CD14-positive monocyte (primary cell): ENCODE measurements at regions of chr1 and their contacts with region 1.

Region 1: GRCh38 chr1:29698033-29698432 is 461.7 kb downstream of the PTPRU start:
- DNase-seq: no peak
- H3K4me3 ChIP-seq: no peak overlapping the region
- H3K4me3 Mint-ChIP-seq: no peak overlapping the region
- H3K27ac ChIP-seq: no peak overlapping the region
- H3K27ac Mint-ChIP-seq: no peak overlapping the region
- H3K4me1 ChIP-seq: no peaks in the 10 kb centered on the region
- H3K4me1 Mint-ChIP-seq: no peaks in the 10 kb centered on the region
- H3K27me3 ChIP-seq: no peaks in the 10 kb centered on the region
- H3K27me3 Mint-ChIP-seq: peaks cover 0 to 9% (median 7%) of the 10 kb centered on the region in 3 donors
- CTCF ChIP-seq: peak; percentile 31

Region 2: DNA sequence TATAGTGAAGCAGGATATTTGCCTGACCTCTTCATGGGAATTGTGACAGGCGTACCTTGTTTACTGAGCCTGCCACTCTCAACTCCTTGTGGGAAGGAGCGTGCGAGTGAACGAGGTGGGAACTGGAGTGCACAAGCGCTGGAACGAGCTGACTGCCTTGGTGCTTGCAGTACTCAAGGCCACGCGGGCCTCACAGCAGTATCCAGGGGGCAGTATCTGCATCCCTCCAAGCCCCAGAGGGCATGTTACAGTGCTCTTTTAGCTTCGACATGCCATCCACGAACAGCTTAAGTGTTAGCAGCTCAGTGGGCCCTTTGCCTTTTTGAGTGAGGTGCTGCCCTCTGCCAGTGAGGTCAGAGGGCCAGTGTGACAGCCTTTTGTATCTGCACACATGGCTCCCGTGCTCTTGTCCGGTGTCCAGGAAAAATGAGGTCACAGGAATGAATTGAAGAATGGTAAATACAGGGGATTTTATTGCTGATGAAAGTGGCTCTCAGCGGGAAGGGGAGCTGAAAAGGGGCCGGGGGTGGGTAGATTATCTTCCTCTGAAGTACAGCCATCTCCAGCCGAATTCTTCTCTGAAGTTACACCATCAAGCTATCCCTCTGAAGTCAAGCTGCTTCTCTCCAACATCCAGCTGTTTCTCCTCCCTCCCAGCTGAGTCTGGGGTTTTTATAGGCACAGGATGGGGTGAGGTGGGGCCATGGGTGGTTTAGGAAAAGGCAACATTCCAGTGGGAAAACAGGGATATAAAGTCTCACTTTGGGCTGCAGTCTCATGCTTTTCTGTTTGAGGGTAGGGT is 714.3 kb before region 1 on chr1:
- intact Hi-C with region 1: loop called in 1 of 2 experiments (anchors 10 kb)
- DNase-seq: no peak
- H3K4me3 ChIP-seq: no peak overlapping the region
- H3K4me3 Mint-ChIP-seq: no peak overlapping the region
- H3K27ac ChIP-seq: no peak overlapping the region
- H3K27ac Mint-ChIP-seq: peak overlapping the region in 1 of 7 donors; percentile 7
- H3K4me1 ChIP-seq: peaks cover 13 to 18% of the 10 kb centered on the region in 2 donors
- H3K4me1 Mint-ChIP-seq: peaks cover 25% of the 10 kb centered on the region
- H3K27me3 ChIP-seq: no peaks in the 10 kb centered on the region
- H3K27me3 Mint-ChIP-seq: no peaks in the 10 kb centered on the region
- CTCF ChIP-seq: no peak

Region 3: GRCh38 chr1:29117381-29117780 is 580.7 kb before region 1 on chr1:
- intact Hi-C with region 1: no loop called
- DNase-seq: no peak
- H3K4me3 ChIP-seq: no peak overlapping the region
- H3K4me3 Mint-ChIP-seq: no peak overlapping the region
- H3K27ac ChIP-seq: no peak overlapping the region
- H3K27ac Mint-ChIP-seq: no peak overlapping the region
- H3K4me1 ChIP-seq: peaks cover 4 to 11% of the 10 kb centered on the region in 2 donors
- H3K4me1 Mint-ChIP-seq: peaks cover 2% of the 10 kb centered on the region
- H3K27me3 ChIP-seq: peaks cover 5 to 17% of the 10 kb centered on the region in 2 donors
- H3K27me3 Mint-ChIP-seq: peaks cover 15 to 26% (median 18%) of the 10 kb centered on the region in 3 donors
- CTCF ChIP-seq: no peak

Region 4: GRCh38 chr1:29767088-29767685 is 69.2 kb after region 1 on chr1:
- intact Hi-C with region 1: no loop called
- DNase-seq: no peak
- H3K4me3 ChIP-seq: no peak overlapping the region
- H3K4me3 Mint-ChIP-seq: no peak overlapping the region
- H3K27ac ChIP-seq: no peak overlapping the region
- H3K27ac Mint-ChIP-seq: no peak overlapping the region
- H3K4me1 ChIP-seq: no peaks in the 10 kb centered on the region
- H3K4me1 Mint-ChIP-seq: no peaks in the 10 kb centered on the region
- H3K27me3 ChIP-seq: peaks cover 4 to 6% of the 10 kb centered on the region in 2 donors
- H3K27me3 Mint-ChIP-seq: peaks cover 5 to 32% (median 10%) of the 10 kb centered on the region in 3 donors
- CTCF ChIP-seq: no peak

Region 5: DNA sequence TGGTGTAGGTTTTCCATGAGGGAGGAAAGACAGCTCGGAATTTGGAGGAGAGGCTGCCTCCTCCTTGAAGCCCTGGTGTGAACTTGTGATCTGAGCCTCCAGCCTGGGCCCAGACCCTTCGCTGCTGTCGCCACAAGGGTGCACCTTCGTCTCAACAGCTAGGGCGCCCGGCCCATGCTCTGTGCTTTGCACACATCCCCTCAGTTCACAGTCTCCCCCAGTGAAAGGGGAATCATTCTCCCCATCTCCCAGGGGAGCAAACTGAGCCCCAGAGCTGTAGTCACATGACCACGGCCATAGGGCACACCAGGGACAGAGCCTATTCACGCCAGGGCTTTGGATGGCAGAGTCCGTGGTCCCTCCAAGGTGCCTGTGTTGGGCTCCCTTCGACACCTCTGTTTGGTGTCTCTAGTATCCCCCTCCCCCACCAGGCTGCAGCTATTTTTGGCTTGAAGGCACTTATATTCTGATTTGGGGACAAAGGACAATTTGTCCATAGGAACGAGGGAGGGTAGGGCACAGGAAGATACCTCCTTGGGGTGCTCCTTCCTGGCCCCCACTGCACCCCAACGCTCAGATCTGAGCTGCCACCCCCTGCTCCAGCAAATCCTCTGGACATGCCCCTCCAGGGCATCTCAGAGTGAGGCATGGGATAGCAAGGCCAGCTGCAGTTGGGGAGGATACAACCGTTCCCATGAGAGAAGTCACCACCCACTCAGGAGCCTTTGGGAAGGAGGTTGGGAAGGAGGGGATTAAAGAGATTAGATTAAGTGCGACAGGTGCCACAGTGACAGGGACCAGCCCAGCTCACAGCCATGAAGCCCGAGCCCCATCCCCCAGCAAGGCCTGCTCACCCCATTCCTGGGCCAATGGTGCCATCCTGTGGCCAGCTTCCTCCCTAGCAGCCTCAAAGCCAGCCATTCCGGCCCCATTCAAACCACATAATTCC is 1009.7 kb after region 1 on chr1:
- intact Hi-C with region 1: loop called in 1 of 2 experiments (anchors 10 kb)
- DNase-seq: peak; percentile 38 to 55 (median 42)
- H3K4me3 ChIP-seq: no peak overlapping the region
- H3K4me3 Mint-ChIP-seq: peak overlapping the region in 1 of 2 donors; percentile 36
- H3K27ac ChIP-seq: no peak overlapping the region
- H3K27ac Mint-ChIP-seq: no peak overlapping the region
- H3K4me1 ChIP-seq: no peaks in the 10 kb centered on the region
- H3K4me1 Mint-ChIP-seq: no peaks in the 10 kb centered on the region
- H3K27me3 ChIP-seq: no peaks in the 10 kb centered on the region
- H3K27me3 Mint-ChIP-seq: peaks cover 13 to 21% (median 13%) of the 10 kb centered on the region in 3 donors
- CTCF ChIP-seq: peak; percentile 84